ENCODE measurements at regions of chr15 and their contacts with region 1.

Region 1: GRCh38 chr15:81480645-81481053 is 106.6 kb upstream of the TMC3 start:
- DNase-seq: peak; percentile 69
- ATAC-seq: peak; percentile 81
- H3K4me3 ChIP-seq: no peak overlapping the region
- H3K27ac ChIP-seq: no peak overlapping the region
- H3K4me1 ChIP-seq: no peaks in the 10 kb centered on the region
- H3K27me3 ChIP-seq: no peaks in the 10 kb centered on the region
- CTCF ChIP-seq: peak; percentile 83
- POLR2A ChIP-seq: 0 out of 2 replicates have a peak, but pooled peaks have one; percentile 29
- RAD21 ChIP-seq: peak; percentile 94

Region 2: DNA sequence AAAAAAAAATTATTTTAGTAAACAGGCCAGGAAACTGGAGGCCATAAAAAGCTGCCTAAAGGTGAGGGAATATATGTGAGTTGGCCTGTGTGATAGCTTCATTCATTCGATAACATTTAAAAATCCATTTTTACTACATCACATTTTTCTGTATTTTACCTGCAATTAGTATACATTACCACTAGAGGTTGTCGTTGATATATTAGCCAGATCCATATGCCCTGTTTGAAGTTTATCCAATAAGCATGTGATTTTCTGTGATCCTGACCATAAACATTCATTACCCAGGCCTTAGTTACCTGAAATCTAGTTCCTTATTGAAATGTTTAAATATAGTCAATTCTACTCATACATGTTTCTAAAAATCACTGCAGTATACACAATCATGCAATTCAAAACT is 1005.1 kb before region 1 on chr15:
- CTCF ChIA-PET with region 1: no interaction called
- POLR2A ChIA-PET with region 1: no interaction called
- dilution Hi-C with region 1: no loop called
- in situ Hi-C with region 1: no loop called
- intact Hi-C with region 1: no loop called
- DNase-seq: no peak
- ATAC-seq: no peak
- H3K4me3 ChIP-seq: no peak overlapping the region
- H3K27ac ChIP-seq: no peak overlapping the region
- H3K4me1 ChIP-seq: peaks cover 37% of the 10 kb centered on the region
- H3K27me3 ChIP-seq: no peaks in the 10 kb centered on the region
- CTCF ChIP-seq: no peak
- POLR2A ChIP-seq: no peak
- RAD21 ChIP-seq: no peak; the same call in 1 of the 2 replicates

Region 3: GRCh38 chr15:81274931-81275707 is 205.5 kb before region 1 on chr15:
- CTCF ChIA-PET with region 1: no interaction called
- POLR2A ChIA-PET with region 1: no interaction called
- dilution Hi-C with region 1: no loop called
- in situ Hi-C with region 1: no loop called
- intact Hi-C with region 1: loop called (anchors 2 kb)
- DNase-seq: peak; percentile 86
- ATAC-seq: peak; percentile 91
- H3K4me3 ChIP-seq: no peak overlapping the region
- H3K27ac ChIP-seq: no peak overlapping the region; the same call in 1 of the 2 replicates
- H3K4me1 ChIP-seq: peaks cover 9% of the 10 kb centered on the region
- H3K27me3 ChIP-seq: no peaks in the 10 kb centered on the region
- CTCF ChIP-seq: peak; percentile 92
- POLR2A ChIP-seq: no peak
- RAD21 ChIP-seq: peak; percentile 98

Region 4: GRCh38 chr15:81469154-81469553 is 11.5 kb before region 1 on chr15:
- CTCF ChIA-PET with region 1: no interaction called
- POLR2A ChIA-PET with region 1: no interaction called
- dilution Hi-C with region 1: no loop called
- in situ Hi-C with region 1: no loop called
- intact Hi-C with region 1: no loop called
- DNase-seq: no peak
- ATAC-seq: no peak
- H3K4me3 ChIP-seq: no peak overlapping the region
- H3K27ac ChIP-seq: no peak overlapping the region
- H3K4me1 ChIP-seq: no peaks in the 10 kb centered on the region
- H3K27me3 ChIP-seq: peaks cover 14% of the 10 kb centered on the region
- CTCF ChIP-seq: no peak
- POLR2A ChIP-seq: no peak
- RAD21 ChIP-seq: no peak

Region 5: GRCh38 chr15:81642451-81642990 is 161.9 kb after region 1 on chr15:
- CTCF ChIA-PET with region 1: no interaction called
- POLR2A ChIA-PET with region 1: no interaction called
- dilution Hi-C with region 1: no loop called
- in situ Hi-C with region 1: no loop called
- intact Hi-C with region 1: loop called (anchors 5 kb)
- DNase-seq: peak; percentile 97
- ATAC-seq: peak; percentile 95
- H3K4me3 ChIP-seq: no peak overlapping the region
- H3K27ac ChIP-seq: peak overlapping the region; percentile 93; the same call in 1 of the 2 replicates
- H3K4me1 ChIP-seq: peaks cover 11% of the 10 kb centered on the region
- H3K27me3 ChIP-seq: no peaks in the 10 kb centered on the region
- CTCF ChIP-seq: no peak
- POLR2A ChIP-seq: no peak
- RAD21 ChIP-seq: no peak

Region 6: GRCh38 chr15:82103468-82103867 is 622.8 kb after region 1 on chr15:
- CTCF ChIA-PET with region 1: no interaction called
- POLR2A ChIA-PET with region 1: no interaction called
- dilution Hi-C with region 1: no loop called
- in situ Hi-C with region 1: no loop called
- intact Hi-C with region 1: loop called (anchors 1 kb)
- DNase-seq: no peak
- ATAC-seq: no peak
- H3K4me3 ChIP-seq: no peak overlapping the region
- H3K27ac ChIP-seq: no peak overlapping the region
- H3K4me1 ChIP-seq: peaks cover 15% of the 10 kb centered on the region
- H3K27me3 ChIP-seq: no peaks in the 10 kb centered on the region
- CTCF ChIP-seq: peak; percentile 37
- POLR2A ChIP-seq: no peak
- RAD21 ChIP-seq: peak; percentile 53

Region 7: DNA sequence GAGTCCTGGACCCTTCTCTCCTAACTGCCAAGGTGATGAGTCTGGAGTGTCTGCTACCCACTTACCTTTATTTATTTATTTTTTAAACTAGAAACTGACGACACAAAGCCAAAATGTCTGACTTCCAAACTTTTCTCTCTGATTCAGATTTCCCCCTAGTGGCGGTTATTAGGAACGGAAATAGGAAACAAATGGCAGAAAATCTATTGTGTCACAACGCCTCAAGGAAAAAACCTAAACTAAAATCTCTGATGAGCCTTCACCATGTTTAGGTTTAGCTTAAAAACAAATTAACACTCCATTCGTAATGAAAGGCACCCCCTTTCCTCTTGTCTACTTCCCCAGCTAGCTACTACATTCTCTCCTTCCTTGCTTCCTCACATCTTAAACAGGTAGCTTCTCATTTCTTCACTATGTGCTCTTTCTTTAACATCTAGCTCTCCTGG is 659.2 kb after region 1 on chr15:
- CTCF ChIA-PET with region 1: no interaction called
- POLR2A ChIA-PET with region 1: no interaction called
- dilution Hi-C with region 1: no loop called
- in situ Hi-C with region 1: no loop called
- intact Hi-C with region 1: loop called (anchors 2 kb)
- DNase-seq: peak; percentile 70
- ATAC-seq: peak; percentile 71
- H3K4me3 ChIP-seq: no peak overlapping the region
- H3K27ac ChIP-seq: no peak overlapping the region
- H3K4me1 ChIP-seq: peaks cover 11% of the 10 kb centered on the region
- H3K27me3 ChIP-seq: no peaks in the 10 kb centered on the region
- CTCF ChIP-seq: peak; percentile 77
- POLR2A ChIP-seq: no peak
- RAD21 ChIP-seq: peak; percentile 65